ENCODE measurements at regions of chr1 and their contacts with region 1.

Region 1: GRCh38 chr1:201538612-201539551 is at the start of gene NAV1:
- DNase-seq: peak in 2 of 3 donors; percentile 54 to 69
- H3K4me3 ChIP-seq: peak within 1 kb of the TSS; percentile 58 to 89 (median 73)
- H3K27ac ChIP-seq: no peak within 1 kb of the TSS
- H3K4me1 ChIP-seq: peaks cover 0 to 56% (median 50%) of the 10 kb centered on the region in 4 experiments
- H3K27me3 ChIP-seq: peaks cover 0 to 1% (median 0%) of the 10 kb centered on the region in 5 experiments

Region 2: DNA sequence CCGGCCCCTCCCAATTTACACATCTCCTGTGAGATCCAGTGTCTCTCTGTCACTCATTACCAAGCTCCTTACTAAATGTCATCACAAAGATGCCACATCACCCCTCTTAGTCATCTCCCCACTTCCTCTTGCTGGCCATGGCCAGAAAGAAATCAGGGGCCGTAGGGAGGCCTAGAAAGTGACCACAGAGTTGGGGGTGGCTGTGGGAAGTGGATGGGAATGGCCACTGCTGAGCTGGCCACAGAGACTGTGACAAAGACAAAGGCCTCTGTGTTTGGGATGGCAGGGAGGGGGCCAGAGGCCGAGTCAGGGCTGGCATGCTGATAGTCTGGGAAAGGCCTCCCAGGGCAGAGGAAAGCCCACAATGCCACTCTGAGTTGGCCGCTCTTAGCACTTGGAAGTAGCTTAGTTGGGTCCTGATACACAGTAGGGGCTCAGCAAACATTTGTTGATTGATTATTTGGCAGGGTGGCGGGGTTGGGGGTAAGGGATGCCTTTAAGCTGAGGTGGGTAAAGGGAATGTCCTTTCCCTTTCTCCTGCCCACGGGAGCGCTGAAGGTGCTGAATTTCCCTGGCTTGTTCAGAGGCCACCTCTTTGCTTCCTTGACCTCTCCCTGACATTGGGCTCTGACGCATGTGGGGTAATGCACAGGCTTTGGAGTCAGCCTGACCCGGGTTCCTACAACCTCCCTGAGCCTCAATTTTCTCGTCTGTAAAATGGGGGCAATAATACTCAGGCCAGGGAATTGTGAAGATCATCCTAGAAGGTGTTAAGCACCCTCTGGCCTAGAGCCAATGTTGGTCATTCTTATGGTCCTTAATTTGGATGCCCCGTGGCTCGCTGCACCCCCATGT is 13.2 kb after region 1 on chr1:
- CTCF ChIA-PET with region 1: interaction called, 147 read pairs
- POLR2A ChIA-PET with region 1: interaction called, 3 read pairs
- DNase-seq: peak in 2 of 3 donors; percentile 66 to 78
- H3K4me3 ChIP-seq: no peak overlapping the region
- H3K27ac ChIP-seq: no peak overlapping the region
- H3K4me1 ChIP-seq: peaks cover 6 to 59% (median 52%) of the 10 kb centered on the region in 4 experiments
- H3K27me3 ChIP-seq: no peaks in the 10 kb centered on the region

Region 3: DNA sequence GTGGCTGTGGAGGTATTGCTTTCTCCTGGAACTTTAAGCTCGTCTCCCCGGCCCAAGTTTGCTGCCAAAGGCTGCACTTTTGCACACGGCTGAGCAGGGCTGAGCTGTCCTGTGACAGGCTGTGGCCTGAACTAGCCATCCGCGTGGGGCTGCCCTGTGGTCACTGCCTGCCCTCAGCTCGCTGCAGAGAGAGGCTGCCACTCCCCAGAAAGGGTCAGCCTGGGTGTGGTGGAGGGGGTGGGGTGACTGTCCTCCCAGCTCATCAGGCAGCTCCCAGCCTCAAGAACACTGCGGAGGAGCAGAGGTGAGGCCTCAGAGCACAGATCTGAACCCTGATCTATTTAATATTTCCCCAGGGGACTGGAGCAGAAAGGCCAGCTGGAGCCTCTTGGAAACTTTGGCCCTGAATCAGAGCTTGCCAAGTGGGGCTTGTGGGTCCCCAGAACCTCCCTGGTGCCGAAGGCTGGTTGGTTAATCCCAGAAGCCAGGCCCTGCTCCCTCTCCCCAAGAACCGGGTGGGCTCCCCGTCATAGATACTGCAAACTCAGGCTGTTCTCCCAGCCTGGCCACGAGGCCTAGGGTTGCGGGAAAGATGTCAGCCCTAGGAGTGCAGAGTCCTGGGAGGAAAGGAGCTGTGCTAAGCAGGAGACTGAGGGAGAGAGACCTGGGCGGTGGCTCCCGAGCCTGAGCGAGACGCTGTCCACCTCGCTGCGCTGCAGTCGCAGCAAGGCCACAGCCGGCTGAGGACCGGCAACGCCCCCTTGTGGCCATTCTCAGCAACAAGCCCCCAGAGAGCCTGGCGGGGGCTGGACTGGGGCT is 164.9 kb after region 1 on chr1:
- CTCF ChIA-PET with region 1: interaction called, 46 read pairs
- POLR2A ChIA-PET with region 1: no interaction called
- DNase-seq: peak; percentile 71 to 86 (median 81)
- H3K4me3 ChIP-seq: no peak overlapping the region
- H3K27ac ChIP-seq: no peak overlapping the region
- H3K4me1 ChIP-seq: peaks cover 0 to 10% (median 4%) of the 10 kb centered on the region in 4 experiments
- H3K27me3 ChIP-seq: no peaks in the 10 kb centered on the region